ENCODE measurements at regions of chr21 and their contacts with region 1.

Region 1: DNA sequence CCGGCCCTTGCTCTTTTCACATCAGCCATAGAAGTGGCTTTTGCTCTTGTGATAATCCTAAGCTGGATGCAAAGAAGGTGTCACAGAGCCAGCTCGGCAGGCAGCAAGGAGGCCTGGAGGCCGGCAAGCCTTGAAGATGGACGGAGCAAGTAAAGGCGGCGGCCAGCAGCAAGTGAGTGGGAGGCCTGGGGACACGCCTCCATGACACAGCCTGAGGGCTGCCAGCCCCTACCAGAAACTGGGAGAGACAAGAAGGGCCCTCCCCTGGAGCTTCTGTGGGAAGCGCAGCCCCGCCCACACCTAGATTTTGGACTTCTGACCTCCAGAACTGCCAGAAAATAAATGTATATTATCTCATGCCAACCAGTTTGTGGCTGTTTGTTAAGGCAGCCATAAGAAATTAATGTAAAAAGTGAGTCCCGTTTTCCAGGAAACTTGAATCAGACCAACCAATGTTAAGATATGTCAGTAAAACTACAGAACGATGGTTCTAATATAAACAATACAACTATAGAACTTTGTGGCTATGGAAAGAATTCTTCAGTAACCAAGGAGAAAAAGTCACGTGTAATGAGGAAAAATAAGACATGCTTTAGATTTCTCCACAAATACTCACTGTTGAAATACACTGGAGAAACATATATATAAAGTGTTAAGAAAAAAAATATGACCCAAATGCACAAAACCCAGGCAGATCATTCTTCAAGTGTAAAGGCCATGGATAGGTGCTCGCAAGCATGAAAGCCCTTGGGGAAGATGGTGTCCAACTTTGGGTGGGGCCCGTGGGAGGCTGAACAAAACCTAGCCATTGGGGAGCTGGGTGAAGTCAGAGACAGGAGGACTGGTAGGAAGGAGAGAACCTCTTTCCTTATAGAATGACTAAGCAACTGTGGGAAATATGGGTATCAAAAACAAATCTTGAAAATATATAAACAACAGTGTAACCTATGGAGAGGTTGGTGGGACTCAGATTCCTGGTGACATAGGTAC is 50.0 kb downstream of the BACE2 start:
- DNase-seq: peak; percentile 53
- H3K4me3 Mint-ChIP-seq: peak overlapping the region; percentile 43
- H3K27ac Mint-ChIP-seq: peak overlapping the region; percentile 45
- H3K4me1 Mint-ChIP-seq: peaks cover 49% of the 10 kb centered on the region
- H3K27me3 Mint-ChIP-seq: no peaks in the 10 kb centered on the region
- CTCF ChIP-seq: no peak

Region 2: GRCh38 chr21:41170442-41170841 is 47.5 kb before region 1 on chr21:
- CTCF ChIA-PET with region 1: interaction called, 6 read pairs
- intact Hi-C with region 1: loop called (anchors 2 kb)
- DNase-seq: peak; percentile 76
- H3K4me3 Mint-ChIP-seq: peak overlapping the region; percentile 75
- H3K27ac Mint-ChIP-seq: peak overlapping the region; percentile 54
- H3K4me1 Mint-ChIP-seq: peaks cover 19% of the 10 kb centered on the region
- H3K27me3 Mint-ChIP-seq: no peaks in the 10 kb centered on the region
- CTCF ChIP-seq: peak; percentile 61

Region 3: GRCh38 chr21:41338455-41338854 is 120.5 kb after region 1 on chr21:
- CTCF ChIA-PET with region 1: no interaction called
- intact Hi-C with region 1: no loop called
- DNase-seq: no peak
- H3K4me3 Mint-ChIP-seq: no peak overlapping the region
- H3K27ac Mint-ChIP-seq: no peak overlapping the region
- H3K4me1 Mint-ChIP-seq: no peaks in the 10 kb centered on the region
- H3K27me3 Mint-ChIP-seq: peaks cover 46% of the 10 kb centered on the region
- CTCF ChIP-seq: no peak